Heart right ventricle (tissue), 16 donors: ENCODE measurements at regions of chr5 and their contacts with region 1.

Region 1: DNA sequence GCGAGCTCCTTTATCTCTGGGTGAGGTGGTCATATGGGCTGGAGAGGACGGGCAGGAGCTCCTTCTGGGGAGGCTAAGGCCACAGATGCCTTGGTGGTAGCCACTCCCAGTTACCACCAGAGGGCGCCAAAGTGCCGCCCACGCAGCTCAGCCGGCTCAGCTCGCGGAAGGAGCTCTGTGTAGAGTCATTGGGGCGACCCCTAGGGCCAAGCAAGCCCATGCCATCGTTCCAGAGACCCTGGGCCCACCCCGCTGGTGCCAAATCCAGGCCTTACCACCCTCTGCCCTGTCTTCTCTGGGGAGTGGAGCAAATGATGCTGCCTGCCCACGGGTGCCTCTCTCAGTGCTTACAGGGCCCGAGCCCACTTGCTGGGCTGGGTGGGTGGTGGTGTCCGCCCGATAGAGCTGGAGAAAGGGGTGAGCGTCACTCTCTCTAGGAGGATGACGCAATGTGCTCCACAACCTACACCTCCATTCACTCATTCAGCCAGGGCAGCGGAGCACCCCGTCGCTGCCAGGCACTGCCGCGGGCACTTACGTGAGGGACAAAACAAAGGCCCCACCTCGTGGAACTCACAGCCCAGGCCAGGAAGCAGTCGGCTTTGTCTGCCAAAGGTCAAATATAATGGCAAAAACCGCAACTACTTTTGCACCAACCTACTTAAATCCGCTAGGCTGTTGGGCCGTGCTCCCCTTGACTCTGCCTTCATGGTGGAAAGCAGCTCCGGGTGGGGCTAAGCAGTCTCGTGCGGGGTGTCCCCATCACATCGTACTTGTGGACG is 13.8 kb downstream of the TSPAN17 start:
- DNase-seq: peak; percentile 71 to 77
- ATAC-seq: peak; percentile 65 to 87 (median 82)
- H3K4me3 ChIP-seq: no peak overlapping the region
- H3K27ac ChIP-seq: no peak overlapping the region
- H3K4me1 ChIP-seq: peaks cover 0 to 28% (median 14%) of the 10 kb centered on the region in 9 donors
- H3K27me3 ChIP-seq: peaks cover 0 to 44% (median 33%) of the 10 kb centered on the region in 7 donors
- CTCF ChIP-seq: peak; percentile 92 to 99 (median 98)

Region 2: GRCh38 chr5:176596689-176597416 is 64.2 kb before region 1 on chr5:
- intact Hi-C with region 1: no loop called
- DNase-seq: peak in 1 of 2 donors; percentile 38
- ATAC-seq: peak; percentile 62 to 78 (median 68)
- H3K4me3 ChIP-seq: peak overlapping the region in 9 of 10 donors; percentile 24 to 49 (median 35)
- H3K27ac ChIP-seq: no peak overlapping the region
- H3K4me1 ChIP-seq: peaks cover 0 to 4% (median 0%) of the 10 kb centered on the region in 9 donors
- H3K27me3 ChIP-seq: peaks cover 0 to 34% (median 8%) of the 10 kb centered on the region in 7 donors
- CTCF ChIP-seq: peak in 6 of 9 donors; percentile 8 to 48 (median 32)

Region 3: DNA sequence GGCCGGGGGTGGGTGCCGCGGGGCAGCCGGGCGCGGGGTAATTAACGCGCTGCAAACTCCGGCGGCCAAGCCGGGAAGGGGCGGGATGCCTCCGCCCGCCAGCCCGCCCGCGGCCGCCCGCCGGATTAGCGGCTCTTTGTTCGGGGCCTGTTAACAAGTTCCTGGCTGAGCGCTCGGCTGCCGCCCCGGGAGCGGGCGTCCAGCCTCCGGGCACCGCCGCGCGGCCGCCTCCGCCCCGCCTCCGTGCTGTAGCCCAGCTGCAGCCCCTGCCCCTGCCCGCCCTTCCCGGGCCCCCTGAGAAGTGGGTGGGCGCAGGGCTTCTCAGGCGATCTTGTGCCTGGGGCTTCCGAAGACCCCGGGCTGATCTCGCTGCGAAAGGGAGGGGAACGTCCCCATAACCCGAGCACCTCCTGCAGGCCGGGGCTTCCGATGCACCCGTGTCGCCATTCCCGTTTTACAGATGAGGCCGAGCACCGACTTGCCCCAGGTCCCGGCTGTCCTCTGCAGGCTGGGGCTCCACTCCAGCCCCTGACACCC is 156.9 kb after region 1 on chr5:
- intact Hi-C with region 1: loop called in 4 of 10 experiments (anchors 10 kb)
- DNase-seq: no peak
- ATAC-seq: peak in 1 of 8 donors; percentile 26
- H3K4me3 ChIP-seq: peak overlapping the region; percentile 4 to 47 (median 38)
- H3K27ac ChIP-seq: no peak overlapping the region
- H3K4me1 ChIP-seq: peaks cover 0 to 15% (median 7%) of the 10 kb centered on the region in 9 donors
- H3K27me3 ChIP-seq: peaks cover 15 to 96% (median 89%) of the 10 kb centered on the region in 7 donors
- CTCF ChIP-seq: peak in 5 of 9 donors; percentile 12 to 33 (median 29)

Region 4: GRCh38 chr5:176954050-176954449 is 293.0 kb after region 1 on chr5:
- intact Hi-C with region 1: loop called (anchors 2 to 10 kb)
- DNase-seq: no peak
- ATAC-seq: no peak
- H3K4me3 ChIP-seq: no peak overlapping the region
- H3K27ac ChIP-seq: no peak overlapping the region
- H3K4me1 ChIP-seq: peaks cover 0 to 31% (median 6%) of the 10 kb centered on the region in 9 donors
- H3K27me3 ChIP-seq: no peaks in the 10 kb centered on the region
- CTCF ChIP-seq: no peak

Region 5: DNA sequence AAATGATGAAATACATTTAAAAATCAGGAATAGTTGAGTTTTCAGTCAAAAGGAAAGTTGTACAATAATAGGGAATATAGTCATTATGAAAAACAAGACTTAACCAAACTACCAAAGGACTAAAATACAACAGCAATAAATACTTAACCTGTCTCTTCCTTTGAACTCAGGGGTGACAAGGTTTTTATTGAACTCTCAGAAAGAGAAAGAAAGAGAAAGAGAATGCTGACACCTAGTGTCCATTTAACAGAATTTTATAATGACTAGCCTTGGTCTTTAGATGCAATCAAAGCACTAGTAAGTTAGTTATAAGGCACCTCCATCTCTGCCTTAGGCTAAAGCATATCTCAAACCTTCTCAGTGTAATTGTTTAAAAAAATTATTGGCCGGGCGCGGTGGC is 298.0 kb after region 1 on chr5:
- intact Hi-C with region 1: loop called (anchors 2 to 10 kb)
- DNase-seq: no peak
- ATAC-seq: peak in 2 of 8 donors; percentile 34 to 49
- H3K4me3 ChIP-seq: no peak overlapping the region
- H3K27ac ChIP-seq: no peak overlapping the region
- H3K4me1 ChIP-seq: peaks cover 0 to 20% (median 6%) of the 10 kb centered on the region in 9 donors
- H3K27me3 ChIP-seq: no peaks in the 10 kb centered on the region
- CTCF ChIP-seq: peak in 8 of 9 donors; percentile 16 to 62 (median 50)

Region 6: GRCh38 chr5:177099422-177100093 is 438.5 kb after region 1 on chr5:
- intact Hi-C with region 1: loop called in 1 of 10 experiments (anchors 10 kb)
- DNase-seq: no peak
- ATAC-seq: no peak
- H3K4me3 ChIP-seq: no peak overlapping the region
- H3K27ac ChIP-seq: no peak overlapping the region
- H3K4me1 ChIP-seq: peaks cover 7 to 29% (median 12%) of the 10 kb centered on the region in 9 donors
- H3K27me3 ChIP-seq: peaks cover 0 to 21% (median 8%) of the 10 kb centered on the region in 7 donors
- CTCF ChIP-seq: no peak